CD14-positive monocyte (primary cell): ENCODE measurements at regions of chr17 and their contacts with region 1.

Region 1: DNA sequence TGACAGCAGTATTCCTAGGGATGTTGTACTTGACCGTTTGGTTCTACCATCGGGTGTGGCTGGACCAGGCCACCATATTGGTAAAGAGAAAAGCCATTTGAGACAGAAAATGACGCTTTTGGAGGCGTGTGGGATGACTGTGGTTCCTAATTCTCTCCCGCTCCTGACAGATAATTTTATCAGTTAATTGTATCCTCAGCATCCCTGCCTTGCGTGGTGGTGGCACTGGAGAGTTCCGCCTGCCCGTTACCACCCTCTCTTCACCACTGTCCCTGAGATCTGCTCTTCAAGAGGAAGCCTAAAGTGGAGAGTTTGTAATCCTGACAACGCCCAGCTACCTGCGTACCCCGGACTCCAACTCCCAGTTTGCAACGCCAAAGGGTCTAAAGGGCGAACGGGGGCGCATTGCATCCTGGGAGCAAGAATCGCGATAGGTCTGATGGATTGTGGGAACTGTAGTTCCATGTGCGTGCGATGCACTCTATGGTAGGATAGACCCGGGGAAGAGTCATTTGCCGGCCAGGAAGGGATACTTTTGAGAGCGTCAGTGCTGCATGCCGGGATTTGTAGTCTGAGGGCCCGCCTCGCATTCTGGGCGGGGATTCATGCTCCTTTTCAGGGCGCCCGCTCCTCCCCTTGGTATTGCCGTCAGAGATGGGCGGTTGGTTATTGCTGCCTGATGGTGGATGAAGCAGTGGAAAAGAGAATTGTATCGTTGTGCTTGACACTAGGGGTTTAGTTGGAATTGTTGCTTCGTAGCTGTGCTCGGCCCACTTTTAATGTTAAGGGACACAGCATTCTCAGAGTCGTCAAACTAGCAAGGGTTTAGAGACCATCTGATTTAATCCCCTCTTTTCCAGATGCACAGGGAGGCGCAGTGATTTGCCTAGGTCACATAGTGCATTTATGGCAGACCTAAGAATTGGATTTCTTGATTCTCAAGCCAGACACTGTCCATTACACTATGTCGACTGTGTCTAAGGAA is 965 bp upstream of the PHF12 start:
- DNase-seq: peak; percentile 99 to 100 (median 99)
- H3K4me3 ChIP-seq: peak overlapping the region; percentile 53 to 98 (median 68)
- H3K4me3 Mint-ChIP-seq: no peak overlapping the region
- H3K27ac ChIP-seq: peak overlapping the region; percentile 95 to 96
- H3K27ac Mint-ChIP-seq: no peak overlapping the region
- H3K4me1 ChIP-seq: peaks cover 31 to 35% of the 10 kb centered on the region in 2 donors
- H3K4me1 Mint-ChIP-seq: peaks cover 15% of the 10 kb centered on the region
- H3K27me3 ChIP-seq: no peaks in the 10 kb centered on the region
- H3K27me3 Mint-ChIP-seq: peaks cover 0 to 3% (median 3%) of the 10 kb centered on the region in 3 donors
- CTCF ChIP-seq: no peak

Region 2: GRCh38 chr17:28717578-28718333 is 234.5 kb before region 1 on chr17 and contains the start of gene RAB34:
- intact Hi-C with region 1: loop called in 1 of 2 experiments (anchors 2 kb)
- DNase-seq: peak; percentile 66 to 80 (median 70)
- H3K4me3 ChIP-seq: peak within 1 kb of the TSS; percentile 50 to 78 (median 55)
- H3K4me3 Mint-ChIP-seq: peak within 1 kb of the TSS; percentile 93 to 94
- H3K27ac ChIP-seq: peak within 1 kb of the TSS; percentile 5 to 61
- H3K27ac Mint-ChIP-seq: peak within 1 kb of the TSS; percentile 83 to 92 (median 89)
- H3K4me1 ChIP-seq: peaks cover 45 to 56% of the 10 kb centered on the region in 2 donors
- H3K4me1 Mint-ChIP-seq: peaks cover 37% of the 10 kb centered on the region
- H3K27me3 ChIP-seq: no peaks in the 10 kb centered on the region
- H3K27me3 Mint-ChIP-seq: peaks cover 0 to 5% (median 2%) of the 10 kb centered on the region in 3 donors
- CTCF ChIP-seq: peak; percentile 20
- polyA plus RNA-seq, gene RAB34: 66.7 to 93.3 (median 79.1) TPM

Region 3: DNA sequence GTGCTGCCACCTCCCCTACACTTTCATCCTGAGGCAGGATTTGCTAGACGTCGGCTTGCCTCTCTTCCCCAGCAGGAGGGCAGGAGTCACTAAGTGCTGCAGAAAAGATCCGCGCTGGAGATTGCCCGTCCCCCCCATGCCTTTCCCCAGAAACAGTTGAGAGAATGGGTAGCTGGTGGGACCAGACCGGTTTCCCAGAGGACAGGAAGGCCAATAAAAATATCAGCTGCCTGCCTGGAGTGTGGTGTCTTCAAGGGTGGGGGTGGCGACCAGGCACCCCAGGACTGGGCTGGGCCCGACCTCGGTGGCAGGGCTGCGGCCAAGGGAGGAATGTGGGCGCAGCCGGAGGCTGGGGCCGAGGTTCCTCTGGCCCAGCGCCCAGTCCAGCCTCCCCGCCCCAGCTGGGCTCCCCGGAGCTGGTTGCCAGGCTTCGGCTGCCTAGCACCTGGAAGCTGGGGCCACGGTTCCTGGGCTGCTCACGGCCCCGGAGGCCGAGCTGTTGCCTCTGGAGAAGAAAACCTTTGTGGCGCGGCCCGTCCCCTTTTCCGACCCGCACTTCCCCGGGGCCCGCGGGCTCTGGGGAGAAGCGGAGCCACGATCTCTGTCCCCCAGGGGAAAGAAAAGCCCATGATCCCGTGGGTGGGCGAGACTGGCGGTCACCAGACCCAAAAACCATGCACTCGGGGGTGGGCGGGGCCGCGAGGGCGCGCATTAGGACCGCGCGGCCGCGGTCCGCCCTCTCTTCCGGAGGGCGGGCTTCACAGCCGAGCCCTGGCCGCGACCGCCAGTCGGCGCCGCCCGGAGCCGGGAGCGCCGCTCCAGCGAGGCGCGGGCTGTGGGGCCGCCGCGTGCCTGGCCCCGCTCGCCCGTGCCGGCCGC is 208.8 kb before region 1 on chr17 and contains the start of gene TRAF4:
- intact Hi-C with region 1: loop called in 1 of 2 experiments (anchors 10 kb)
- DNase-seq: peak; percentile 63 to 70 (median 68)
- H3K4me3 ChIP-seq: peak within 1 kb of the TSS; percentile 49 to 82 (median 69)
- H3K4me3 Mint-ChIP-seq: peak within 1 kb of the TSS; percentile 77 to 84
- H3K27ac ChIP-seq: peak within 1 kb of the TSS in 1 of 2 donors; percentile 58
- H3K27ac Mint-ChIP-seq: peak within 1 kb of the TSS in 5 of 7 donors; percentile 8 to 81 (median 69)
- H3K4me1 ChIP-seq: peaks cover 49 to 51% of the 10 kb centered on the region in 2 donors
- H3K4me1 Mint-ChIP-seq: peaks cover 35% of the 10 kb centered on the region
- H3K27me3 ChIP-seq: peaks cover 4 to 15% of the 10 kb centered on the region in 2 donors
- H3K27me3 Mint-ChIP-seq: peaks cover 8 to 34% (median 32%) of the 10 kb centered on the region in 3 donors
- CTCF ChIP-seq: peak; percentile 7
- polyA plus RNA-seq, gene TRAF4: 0.33 to 38.0 (median 1.0) TPM

Region 4: DNA sequence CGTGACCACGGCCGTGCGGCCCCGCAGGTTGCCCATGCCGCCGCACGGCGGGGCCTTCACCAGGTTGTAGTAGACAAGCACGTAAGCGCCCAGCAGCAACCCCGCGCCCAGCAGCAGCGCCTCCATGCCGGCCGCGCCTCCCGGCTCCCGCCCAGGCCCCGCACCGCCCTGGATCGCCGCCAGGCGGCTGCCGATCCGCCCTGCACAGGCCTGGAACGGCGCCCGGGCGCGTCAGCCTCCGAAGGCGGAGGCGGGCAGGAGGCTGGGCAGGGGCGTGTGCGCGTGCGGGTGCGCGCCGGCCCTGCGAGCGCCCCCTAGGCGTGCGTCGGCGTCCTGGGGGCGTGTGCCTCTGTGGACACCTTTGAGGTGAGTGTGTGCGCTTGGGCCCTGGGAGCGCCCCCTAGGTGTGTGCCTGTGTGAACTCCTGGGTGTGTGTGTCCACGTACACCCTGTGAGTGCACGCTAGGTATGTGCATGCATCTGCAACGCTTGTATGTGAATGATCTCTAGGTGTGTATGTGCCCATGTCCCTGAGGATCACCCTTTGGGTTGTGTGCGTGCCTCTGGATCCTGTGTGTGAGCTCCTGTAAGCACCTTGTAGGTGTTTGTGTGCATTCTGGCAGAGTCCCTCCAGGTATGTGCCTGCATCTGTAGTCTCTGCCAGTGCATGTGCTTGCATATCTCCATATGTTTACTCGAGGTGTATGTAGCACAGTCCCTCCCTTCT is 49.3 kb before region 1 on chr17 and contains the start of gene DHRS13:
- intact Hi-C with region 1: loop called (anchors 2 to 5 kb)
- DNase-seq: peak; percentile 88 to 93 (median 89)
- H3K4me3 ChIP-seq: peak within 1 kb of the TSS; percentile 53 to 88 (median 63)
- H3K4me3 Mint-ChIP-seq: peak within 1 kb of the TSS; percentile 90 to 96
- H3K27ac ChIP-seq: peak within 1 kb of the TSS in 1 of 2 donors; percentile 67
- H3K27ac Mint-ChIP-seq: peak within 1 kb of the TSS; percentile 56 to 79 (median 64)
- H3K4me1 ChIP-seq: peaks cover 22 to 31% of the 10 kb centered on the region in 2 donors
- H3K4me1 Mint-ChIP-seq: peaks cover 26% of the 10 kb centered on the region
- H3K27me3 ChIP-seq: no peaks in the 10 kb centered on the region
- H3K27me3 Mint-ChIP-seq: peaks cover 1 to 10% (median 2%) of the 10 kb centered on the region in 3 donors
- CTCF ChIP-seq: peak; percentile 99
- polyA plus RNA-seq, gene DHRS13: 3.7 to 4.5 (median 3.8) TPM

Region 5: DNA sequence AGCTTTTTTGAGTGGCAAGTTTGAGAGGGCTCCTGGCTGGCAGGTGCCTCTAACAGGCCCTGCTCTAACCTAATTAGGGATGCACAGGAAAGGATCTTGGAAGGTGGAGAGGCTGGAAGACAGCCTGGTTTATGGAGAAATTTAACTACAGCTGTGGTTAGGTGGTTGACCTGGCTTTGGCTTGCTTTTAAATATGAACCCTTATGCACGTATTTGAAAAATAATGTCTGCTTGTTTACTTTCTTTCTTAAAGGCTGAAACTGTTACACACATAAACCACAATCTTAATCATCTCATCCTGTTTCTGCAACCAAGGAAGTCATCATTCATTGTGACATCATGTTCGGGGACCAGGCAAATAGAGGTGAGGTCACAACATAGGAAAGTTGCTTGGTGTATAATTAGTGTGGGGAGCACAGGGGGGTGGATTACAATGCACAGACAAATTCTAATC is 26.3 kb before region 1 on chr17:
- intact Hi-C with region 1: loop called in 1 of 2 experiments (anchors 2 kb)
- DNase-seq: peak; percentile 89 to 96 (median 90)
- H3K4me3 ChIP-seq: peak overlapping the region; percentile 10 to 55 (median 52)
- H3K4me3 Mint-ChIP-seq: peak overlapping the region; percentile 68 to 87
- H3K27ac ChIP-seq: peak overlapping the region; percentile 84 to 95
- H3K27ac Mint-ChIP-seq: peak overlapping the region; percentile 97 to 99 (median 99)
- H3K4me1 ChIP-seq: peaks cover 38 to 50% of the 10 kb centered on the region in 2 donors
- H3K4me1 Mint-ChIP-seq: peaks cover 54% of the 10 kb centered on the region
- H3K27me3 ChIP-seq: no peaks in the 10 kb centered on the region
- H3K27me3 Mint-ChIP-seq: no peaks in the 10 kb centered on the region
- CTCF ChIP-seq: no peak